ENCODE measurements at regions of chr11 and their contacts with region 1.

Region 1: DNA sequence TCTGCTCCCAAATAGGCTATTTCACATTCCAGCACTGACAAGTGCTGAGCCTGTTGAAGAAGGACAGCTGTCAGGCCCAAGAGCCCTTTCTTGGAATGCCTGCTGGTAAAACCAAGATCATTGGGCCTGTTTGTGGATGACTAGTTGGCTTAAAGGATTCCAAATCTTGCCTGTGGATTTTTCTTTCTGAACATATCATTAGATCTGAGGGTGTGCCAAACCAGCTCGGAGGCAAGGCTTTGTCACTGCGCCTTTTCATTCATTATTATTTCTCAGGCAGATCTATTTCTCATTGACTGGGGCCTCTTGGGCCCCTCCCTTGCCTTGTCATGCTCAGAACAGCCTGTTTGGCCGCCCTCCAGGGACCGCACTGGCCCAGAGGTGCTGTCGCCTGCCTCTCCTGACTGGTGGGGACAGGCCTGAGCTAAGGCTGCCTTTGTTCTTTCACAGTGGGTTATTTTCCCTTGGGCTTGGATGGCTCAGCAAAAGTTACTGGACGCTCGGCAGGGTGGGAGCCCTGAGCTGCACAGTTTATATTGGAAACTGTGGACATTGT is 222.7 kb upstream of the SESN3 start:
- DNase-seq: peak; percentile 91
- H3K4me3 ChIP-seq: no peak overlapping the region
- H3K27ac ChIP-seq: peak overlapping the region; percentile 53
- H3K4me1 ChIP-seq: peaks cover 34% of the 10 kb centered on the region
- H3K27me3 ChIP-seq: no peaks in the 10 kb centered on the region
- CTCF ChIP-seq: peak in 1 of 2 donors; percentile 1

Region 2: GRCh38 chr11:95248666-95249467 is 204.8 kb before region 1 on chr11:
- CTCF ChIA-PET with region 1: interaction called, 10 read pairs
- dilution Hi-C with region 1: no loop called
- in situ Hi-C with region 1: no loop called
- intact Hi-C with region 1: loop called (anchors 5 kb)
- DNase-seq: no peak
- H3K4me3 ChIP-seq: no peak overlapping the region
- H3K27ac ChIP-seq: no peak overlapping the region
- H3K4me1 ChIP-seq: peaks cover 13% of the 10 kb centered on the region
- H3K27me3 ChIP-seq: no peaks in the 10 kb centered on the region
- CTCF ChIP-seq: no peak

Region 3: GRCh38 chr11:95254131-95254704 is 199.5 kb before region 1 on chr11:
- CTCF ChIA-PET with region 1: interaction called, 10 read pairs
- dilution Hi-C with region 1: no loop called
- in situ Hi-C with region 1: no loop called
- intact Hi-C with region 1: loop called (anchors 5 kb)
- DNase-seq: peak; percentile 73
- H3K4me3 ChIP-seq: no peak overlapping the region
- H3K27ac ChIP-seq: no peak overlapping the region
- H3K4me1 ChIP-seq: peaks cover 9% of the 10 kb centered on the region
- H3K27me3 ChIP-seq: no peaks in the 10 kb centered on the region
- CTCF ChIP-seq: no peak

Region 4: GRCh38 chr11:95521133-95521542 is 67.4 kb after region 1 on chr11:
- CTCF ChIA-PET with region 1: no interaction called
- dilution Hi-C with region 1: no loop called
- in situ Hi-C with region 1: no loop called
- intact Hi-C with region 1: loop called (anchors 1 kb)
- DNase-seq: peak; percentile 93
- H3K4me3 ChIP-seq: no peak overlapping the region
- H3K27ac ChIP-seq: peak overlapping the region; percentile 87
- H3K4me1 ChIP-seq: peaks cover 48% of the 10 kb centered on the region
- H3K27me3 ChIP-seq: no peaks in the 10 kb centered on the region
- CTCF ChIP-seq: no peak

Region 5: DNA sequence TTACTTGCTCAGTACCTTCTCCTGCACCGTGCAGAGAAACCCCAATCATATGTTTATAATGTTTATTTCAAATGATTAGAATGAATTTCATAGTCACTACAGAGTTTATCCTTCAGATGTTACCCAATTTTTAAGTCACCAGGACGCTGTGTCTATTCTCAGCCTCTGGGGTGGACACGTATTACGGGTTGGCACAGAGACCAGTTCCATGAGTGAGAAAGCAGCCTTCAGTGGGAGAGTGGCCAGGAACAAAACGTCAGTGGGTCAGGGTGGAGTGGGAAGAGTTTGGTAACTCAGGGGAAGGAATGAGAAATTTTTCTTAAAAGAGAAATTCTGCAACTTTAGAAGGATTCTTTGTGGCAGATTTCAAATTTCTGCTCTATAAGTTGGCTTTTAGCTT is 547.3 kb after region 1 on chr11:
- CTCF ChIA-PET with region 1: no interaction called
- dilution Hi-C with region 1: no loop called
- in situ Hi-C with region 1: no loop called
- intact Hi-C with region 1: no loop called
- DNase-seq: no peak
- H3K4me3 ChIP-seq: no peak overlapping the region
- H3K27ac ChIP-seq: no peak overlapping the region
- H3K4me1 ChIP-seq: peaks cover 11% of the 10 kb centered on the region
- H3K27me3 ChIP-seq: no peaks in the 10 kb centered on the region
- CTCF ChIP-seq: no peak